Astrocyte of the spinal cord (primary cell): ENCODE measurements at regions of chr9 and their contacts with region 1.

Region 1: GRCh38 chr9:131799177-131799823 is 59.4 kb upstream of the RAPGEF1 start:
- DNase-seq: peak; percentile 16
- H3K4me3 ChIP-seq: no peak overlapping the region
- CTCF ChIP-seq: no peak

Region 2: GRCh38 chr9:131872006-131872405 is 72.7 kb after region 1 on chr9:
- in situ Hi-C with region 1: loop called (anchors 10 kb)
- DNase-seq: no peak
- H3K4me3 ChIP-seq: no peak overlapping the region
- CTCF ChIP-seq: peak; percentile 35